Ascending aorta (tissue), 2 donors: ENCODE measurements at regions of chr1 and their contacts with region 1.

Region 1: DNA sequence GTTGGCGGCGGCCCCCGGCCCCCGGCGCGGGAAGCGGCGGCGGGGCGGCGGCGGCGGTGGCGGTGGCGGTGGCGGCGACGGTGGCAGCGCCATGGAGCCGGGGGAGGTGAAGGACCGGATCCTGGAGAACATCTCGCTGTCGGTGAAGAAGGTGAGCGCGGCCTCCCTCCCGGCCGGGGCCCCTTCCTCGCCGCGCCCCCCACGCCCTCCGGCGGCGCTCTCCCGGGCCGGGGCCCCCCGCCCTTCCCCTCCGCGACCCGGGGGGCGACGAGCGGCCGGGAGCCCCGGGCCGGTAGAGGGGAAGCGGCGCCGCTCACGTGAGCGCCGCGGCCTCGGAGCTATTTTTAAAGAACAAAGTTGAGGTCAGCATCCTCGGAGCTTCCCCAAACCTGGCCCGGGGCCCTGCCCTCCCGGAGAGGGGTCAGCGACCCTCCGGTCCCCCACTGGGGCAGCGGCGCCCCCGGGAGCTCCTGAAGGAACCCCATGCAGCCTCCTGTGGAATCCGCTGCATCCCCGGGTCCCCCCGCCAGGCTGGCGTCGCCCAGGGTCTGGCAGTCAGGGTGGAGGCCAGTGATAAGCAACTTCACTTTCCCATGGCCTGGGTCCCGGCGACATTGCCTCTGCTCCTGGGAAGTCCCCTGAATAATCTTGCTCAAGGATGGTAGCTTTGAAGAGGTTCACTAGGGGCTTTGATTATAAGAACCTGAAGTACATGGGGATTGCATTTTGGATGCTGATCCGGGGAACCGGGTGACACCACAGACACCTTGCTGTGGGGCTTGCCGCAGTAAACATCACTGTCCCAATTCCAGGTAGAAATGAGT is 560 bp downstream of the PLEKHM2 start:
- DNase-seq: peak in 1 of 2 donors; percentile 81
- H3K4me3 ChIP-seq: peak overlapping the region; percentile 94 to 99
- H3K27ac ChIP-seq: peak overlapping the region; percentile 97 to 99
- H3K4me1 ChIP-seq: peaks cover 0 to 14% of the 10 kb centered on the region in 2 donors
- H3K27me3 ChIP-seq: no peaks in the 10 kb centered on the region
- CTCF ChIP-seq: no peak

Region 2: GRCh38 chr1:15703562-15703961 is 18.9 kb after region 1 on chr1:
- intact Hi-C with region 1: loop called (anchors 2 kb)
- DNase-seq: peak; percentile 79 to 94
- H3K4me3 ChIP-seq: peak overlapping the region; percentile 3 to 12
- H3K27ac ChIP-seq: peak overlapping the region; percentile 84 to 91
- H3K4me1 ChIP-seq: peaks cover 16 to 26% of the 10 kb centered on the region in 2 donors
- H3K27me3 ChIP-seq: no peaks in the 10 kb centered on the region
- CTCF ChIP-seq: no peak

Region 3: DNA sequence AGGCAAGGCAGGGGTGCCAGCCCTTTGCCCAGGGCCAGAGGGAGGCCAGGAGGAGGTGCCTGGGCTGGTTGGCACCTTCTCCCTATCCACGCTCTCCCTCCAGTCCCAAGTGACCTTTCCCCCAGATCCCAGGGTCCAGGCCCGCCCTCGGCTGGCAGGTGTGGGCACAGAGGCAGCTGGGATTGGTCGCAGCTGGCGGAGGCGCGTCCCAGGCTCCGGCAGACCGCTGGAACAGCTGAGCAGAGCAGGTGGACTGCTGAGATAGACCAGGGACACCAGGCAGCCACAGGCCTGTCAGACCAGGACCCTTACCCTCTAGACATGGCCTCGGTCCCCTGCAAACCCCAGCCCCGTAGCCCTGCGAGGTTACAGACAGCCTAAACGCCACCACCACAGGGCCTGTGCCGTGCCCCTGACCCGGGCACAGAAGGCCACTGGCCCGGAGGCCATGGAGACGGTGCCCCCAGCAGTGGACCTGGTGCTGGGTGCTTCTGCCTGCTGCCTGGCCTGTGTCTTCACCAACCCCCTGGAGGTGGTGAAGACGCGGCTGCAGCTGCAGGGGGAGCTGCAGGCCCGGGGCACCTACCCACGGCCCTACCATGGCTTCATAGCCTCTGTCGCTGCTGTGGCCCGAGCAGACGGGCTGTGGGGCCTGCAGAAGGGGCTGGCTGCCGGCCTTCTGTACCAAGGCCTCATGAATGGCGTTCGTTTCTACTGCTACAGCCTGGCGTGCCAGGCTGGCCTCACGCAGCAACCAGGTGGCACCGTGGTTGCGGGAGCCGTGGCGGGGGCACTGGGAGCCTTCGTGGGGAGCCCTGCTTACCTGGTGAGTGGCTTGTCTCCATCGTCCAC is 51.6 kb after region 1 on chr1 and contains the start of gene SLC25A34:
- intact Hi-C with region 1: loop called (anchors 5 kb)
- DNase-seq: no peak
- H3K4me3 ChIP-seq: peak within 1 kb of the TSS in 1 of 2 donors; percentile 20
- H3K27ac ChIP-seq: peak within 1 kb of the TSS; percentile 62 to 81
- H3K4me1 ChIP-seq: peaks cover 18 to 30% of the 10 kb centered on the region in 2 donors
- H3K27me3 ChIP-seq: no peaks in the 10 kb centered on the region
- CTCF ChIP-seq: peak in 2 of 3 experiments; percentile 37 to 39
- total RNA-seq, gene SLC25A34: 5.7 TPM